HAP-1 (cell line): ENCODE measurements at regions of chr2 and their contacts with region 1.

Region 1: DNA sequence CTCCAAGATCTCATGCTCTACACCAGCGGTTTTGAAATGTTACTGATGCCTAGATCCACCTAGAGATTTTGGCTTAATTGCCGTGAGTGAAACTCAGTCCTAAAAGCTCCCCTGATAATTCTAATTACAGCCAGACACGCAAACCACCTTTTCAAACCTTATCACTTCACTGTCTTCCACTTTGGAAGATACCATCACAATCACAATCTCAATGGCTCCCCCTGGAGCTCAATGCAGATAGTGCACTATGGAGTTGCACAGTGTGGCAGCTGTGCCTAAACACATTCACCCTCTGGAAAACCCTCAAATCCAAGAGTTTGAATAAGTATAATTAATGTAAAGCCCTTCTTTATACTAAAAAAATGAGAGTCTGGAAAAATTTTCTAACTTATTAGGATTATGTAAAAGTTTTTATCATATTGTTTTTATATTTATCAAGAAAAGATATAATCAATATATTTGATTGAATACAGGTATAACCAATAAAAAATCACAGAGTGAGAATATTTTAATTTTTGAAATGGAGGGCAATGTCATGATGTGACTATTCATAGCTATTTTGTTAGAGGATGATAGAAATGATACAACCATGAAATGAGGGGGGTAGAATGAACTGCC is 102.9 kb upstream of the SLC8A1 start:
- DNase-seq: peak; percentile 43 to 83
- H3K4me3 ChIP-seq: no peak overlapping the region
- H3K4me1 ChIP-seq: peaks cover 3% of the 10 kb centered on the region; the same call in 1 of the 2 replicates
- H3K27me3 ChIP-seq: peaks cover 21% of the 10 kb centered on the region

Region 2: GRCh38 chr2:39913648-39914461 is 640.9 kb before region 1 on chr2:
- in situ Hi-C with region 1: loop called (anchors 25 kb)
- DNase-seq: peak; percentile 33 to 82
- H3K4me3 ChIP-seq: no peak overlapping the region
- H3K4me1 ChIP-seq: peaks cover 12% of the 10 kb centered on the region
- H3K27me3 ChIP-seq: no peaks in the 10 kb centered on the region

Region 3: GRCh38 chr2:40886660-40887059 is 331.9 kb after region 1 on chr2:
- in situ Hi-C with region 1: no loop called
- DNase-seq: peak; percentile 21 to 93
- H3K4me3 ChIP-seq: no peak overlapping the region
- H3K4me1 ChIP-seq: peaks cover 13% of the 10 kb centered on the region
- H3K27me3 ChIP-seq: no peaks in the 10 kb centered on the region